ENCODE measurements at regions of chr4 and their contacts with region 1.

Region 1: GRCh38 chr4:2811830-2812611 is 19.1 kb downstream of the SH3BP2 start:
- DNase-seq: peak; percentile 81
- ATAC-seq: peak; percentile 78
- H3K4me3 Mint-ChIP-seq: peak overlapping the region; percentile 98
- H3K27ac Mint-ChIP-seq: peak overlapping the region; percentile 96
- H3K4me1 Mint-ChIP-seq: peaks cover 50% of the 10 kb centered on the region
- H3K27me3 Mint-ChIP-seq: no peaks in the 10 kb centered on the region
- CTCF ChIP-seq: no peak

Region 2: GRCh38 chr4:2800691-2801596 is 11.1 kb before region 1 on chr4:
- CTCF ChIA-PET with region 1: interaction called, 5 read pairs
- POLR2A ChIA-PET with region 1: interaction called, 10 read pairs
- intact Hi-C with region 1: no loop called
- DNase-seq: peak; percentile 56
- ATAC-seq: peak; percentile 40
- H3K4me3 Mint-ChIP-seq: peak overlapping the region; percentile 58
- H3K27ac Mint-ChIP-seq: peak overlapping the region; percentile 59
- H3K4me1 Mint-ChIP-seq: peaks cover 47% of the 10 kb centered on the region
- H3K27me3 Mint-ChIP-seq: no peaks in the 10 kb centered on the region
- CTCF ChIP-seq: no peak

Region 3: GRCh38 chr4:2832349-2833239 is 20.6 kb after region 1 on chr4:
- CTCF ChIA-PET with region 1: interaction called, 3 read pairs
- POLR2A ChIA-PET with region 1: interaction called, 11 read pairs
- intact Hi-C with region 1: no loop called
- DNase-seq: no peak
- ATAC-seq: no peak
- H3K4me3 Mint-ChIP-seq: no peak overlapping the region
- H3K27ac Mint-ChIP-seq: no peak overlapping the region
- H3K4me1 Mint-ChIP-seq: peaks cover 29% of the 10 kb centered on the region
- H3K27me3 Mint-ChIP-seq: no peaks in the 10 kb centered on the region
- CTCF ChIP-seq: no peak

Region 4: GRCh38 chr4:3074078-3074795 is 262.2 kb after region 1 on chr4 and contains the starts of genes HTT and HTT-AS:
- CTCF ChIA-PET with region 1: no interaction called
- POLR2A ChIA-PET with region 1: no interaction called
- intact Hi-C with region 1: no loop called
- DNase-seq: peak; percentile 97
- ATAC-seq: peak; percentile 88
- H3K4me3 Mint-ChIP-seq: peak within 1 kb of the TSS; percentile 95
- H3K27ac Mint-ChIP-seq: peak within 1 kb of the TSS; percentile 92
- H3K4me1 Mint-ChIP-seq: peaks cover 26% of the 10 kb centered on the region
- H3K27me3 Mint-ChIP-seq: no peaks in the 10 kb centered on the region
- CTCF ChIP-seq: no peak
- total RNA-seq, gene HTT: 54.2 to 56.5 TPM
- total RNA-seq, gene HTT-AS: not detected

Measured in activated CD8-positive, alpha-beta T cell treated with anti-CD3 and anti-CD28 coated beads for 36 hours (primary cell).